ENCODE measurements at regions of chr13 and their contacts with region 1.

Region 1: GRCh38 chr13:78680115-78680561 is 21.2 kb upstream of the OBI1 start:
- DNase-seq: no peak
- ATAC-seq: no peak
- H3K4me3 Mint-ChIP-seq: no peak overlapping the region
- H3K27ac Mint-ChIP-seq: no peak overlapping the region
- H3K4me1 Mint-ChIP-seq: peaks cover 10% of the 10 kb centered on the region
- H3K27me3 Mint-ChIP-seq: no peaks in the 10 kb centered on the region; the same call in 1 of the 2 replicates
- CTCF ChIP-seq: no peak

Region 2: GRCh38 chr13:78524936-78525335 is 155.2 kb before region 1 on chr13:
- CTCF ChIA-PET with region 1: no interaction called
- POLR2A ChIA-PET with region 1: no interaction called
- DNase-seq: no peak
- ATAC-seq: no peak
- H3K4me3 Mint-ChIP-seq: no peak overlapping the region
- H3K27ac Mint-ChIP-seq: no peak overlapping the region
- H3K4me1 Mint-ChIP-seq: no peaks in the 10 kb centered on the region
- H3K27me3 Mint-ChIP-seq: no peaks in the 10 kb centered on the region; the same call in 1 of the 2 replicates
- CTCF ChIP-seq: no peak

Region 3: DNA sequence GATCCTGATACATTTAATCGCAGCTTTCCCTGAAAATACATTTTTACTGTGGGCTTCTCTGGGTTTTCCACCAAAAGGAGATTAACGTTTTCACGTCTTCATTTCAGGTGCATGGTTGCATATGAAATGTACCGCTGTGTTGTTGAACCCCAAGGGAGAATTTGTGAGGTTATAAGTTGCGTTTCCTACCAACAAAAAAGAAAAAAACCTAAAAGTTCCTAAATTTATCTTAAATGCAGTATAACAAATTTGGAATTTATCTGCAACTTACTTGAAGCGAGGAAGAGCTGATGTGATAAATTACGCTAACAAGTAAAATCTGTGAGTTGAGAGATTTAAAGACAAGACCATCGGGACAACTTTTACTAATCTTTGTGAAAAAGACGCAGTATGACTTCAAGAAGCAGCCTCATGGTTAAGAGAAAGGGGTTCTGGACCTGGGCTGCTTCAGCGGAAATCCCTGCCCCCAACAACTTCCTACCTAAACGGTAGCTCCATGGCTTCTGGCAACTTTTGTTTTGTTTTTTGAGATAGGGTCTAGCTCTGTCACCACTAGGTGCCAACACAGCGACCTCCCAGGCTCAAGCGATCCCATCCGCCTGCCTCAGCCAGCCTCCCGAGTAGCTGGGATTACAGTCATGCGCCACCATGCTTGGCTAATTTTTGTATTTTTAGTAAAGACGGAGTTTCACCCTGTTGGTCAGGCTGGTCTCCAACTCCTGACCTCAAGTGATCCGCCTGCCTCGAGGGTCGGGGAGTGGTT is 20.2 kb before region 1 on chr13:
- CTCF ChIA-PET with region 1: no interaction called
- POLR2A ChIA-PET with region 1: interaction called, 10 read pairs
- DNase-seq: no peak
- ATAC-seq: peak; percentile 18
- H3K4me3 Mint-ChIP-seq: peak overlapping the region; percentile 96
- H3K27ac Mint-ChIP-seq: 0 out of 2 replicates have a peak overlapping the region, but pooled peaks have one; percentile 57
- H3K4me1 Mint-ChIP-seq: peaks cover 51% of the 10 kb centered on the region
- H3K27me3 Mint-ChIP-seq: peaks cover 51% of the 10 kb centered on the region
- CTCF ChIP-seq: no peak